CD8-positive, alpha-beta T cell (primary cell): ENCODE measurements at regions of chr6 and their contacts with region 1.

Region 1: GRCh38 chr6:158559895-158560835 is at the start of gene TMEM181:
- DNase-seq: peak; percentile 72 to 95 (median 87)
- ATAC-seq: peak; percentile 89
- H3K4me3 ChIP-seq: peak within 1 kb of the TSS; percentile 61
- H3K4me3 Mint-ChIP-seq: peak within 1 kb of the TSS; percentile 92
- H3K27ac ChIP-seq: peak within 1 kb of the TSS; percentile 74 to 87
- H3K27ac Mint-ChIP-seq: peak within 1 kb of the TSS; percentile 90
- H3K4me1 ChIP-seq: peaks cover 31% of the 10 kb centered on the region
- H3K4me1 Mint-ChIP-seq: peaks cover 45% of the 10 kb centered on the region
- H3K27me3 ChIP-seq: no peaks in the 10 kb centered on the region
- H3K27me3 Mint-ChIP-seq: no peaks in the 10 kb centered on the region
- CTCF ChIP-seq: no peak
- total RNA-seq, gene TMEM181: 9.3 to 10.3 TPM

Region 2: GRCh38 chr6:158168040-158168289 is 392.2 kb before region 1 on chr6 and contains the start of gene SERAC1:
- CTCF ChIA-PET with region 1: no interaction called
- POLR2A ChIA-PET with region 1: no interaction called
- intact Hi-C with region 1: loop called (anchors 1 to 5 kb)
- DNase-seq: no peak
- ATAC-seq: no peak
- H3K4me3 ChIP-seq: peak within 1 kb of the TSS; percentile 68 to 98
- H3K4me3 Mint-ChIP-seq: peak within 1 kb of the TSS; percentile 95
- H3K27ac ChIP-seq: peak within 1 kb of the TSS; percentile 90 to 98
- H3K27ac Mint-ChIP-seq: peak within 1 kb of the TSS; percentile 99
- H3K4me1 ChIP-seq: peaks cover 7% of the 10 kb centered on the region
- H3K4me1 Mint-ChIP-seq: peaks cover 35% of the 10 kb centered on the region
- H3K27me3 ChIP-seq: no peaks in the 10 kb centered on the region
- H3K27me3 Mint-ChIP-seq: no peaks in the 10 kb centered on the region
- CTCF ChIP-seq: no peak
- total RNA-seq, gene SERAC1: 1.1 to 2.4 TPM

Region 3: DNA sequence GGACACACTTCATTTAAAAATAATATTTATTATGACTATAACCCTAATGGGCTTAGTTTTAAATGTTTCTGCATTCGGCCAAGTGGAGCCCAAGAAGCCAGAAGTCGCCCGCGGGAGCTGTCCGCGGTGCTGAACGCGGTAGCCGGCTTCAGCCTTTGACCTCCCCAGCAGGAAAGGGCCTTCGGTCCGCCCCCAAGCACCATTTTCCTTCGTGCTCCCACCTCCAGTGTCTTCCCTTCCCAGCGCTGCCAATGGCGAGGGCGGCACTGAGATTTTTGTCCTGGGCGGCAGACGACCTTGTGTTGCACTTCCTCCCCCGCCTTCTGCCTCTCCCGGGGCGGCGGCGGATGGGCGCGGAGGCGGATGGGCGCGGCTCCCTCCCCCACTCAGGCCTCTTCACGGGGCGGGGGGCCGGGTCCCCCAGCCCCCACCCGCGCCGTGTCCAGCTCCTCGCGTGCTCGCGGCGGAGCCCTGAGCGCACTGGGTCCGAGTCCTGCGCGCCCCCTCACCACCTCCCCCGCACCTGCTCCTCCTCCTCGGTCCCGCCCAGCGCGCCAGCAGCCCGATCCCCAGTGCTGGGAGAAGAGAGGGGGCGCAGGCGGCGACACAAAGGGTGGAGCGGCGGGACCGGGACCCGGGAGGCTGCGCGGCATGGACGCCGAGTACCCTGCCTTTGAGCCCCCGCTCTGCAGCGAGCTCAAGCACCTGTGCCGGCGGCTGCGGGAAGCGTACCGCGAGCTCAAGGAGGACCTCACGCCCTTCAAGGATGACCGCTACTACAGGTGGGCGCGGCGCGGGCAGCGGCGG is 23.9 kb before region 1 on chr6:
- CTCF ChIA-PET with region 1: no interaction called
- POLR2A ChIA-PET with region 1: no interaction called
- intact Hi-C with region 1: loop called in 1 of 2 experiments (anchors 1 kb)
- DNase-seq: peak; percentile 44 to 81 (median 70)
- ATAC-seq: peak; percentile 78
- H3K4me3 ChIP-seq: peak overlapping the region; percentile 35 to 48
- H3K4me3 Mint-ChIP-seq: peak overlapping the region; percentile 74
- H3K27ac ChIP-seq: no peak overlapping the region
- H3K27ac Mint-ChIP-seq: no peak overlapping the region
- H3K4me1 ChIP-seq: no peaks in the 10 kb centered on the region
- H3K4me1 Mint-ChIP-seq: peaks cover 3% of the 10 kb centered on the region
- H3K27me3 ChIP-seq: peaks cover 0 to 27% of the 10 kb centered on the region in 2 experiments
- H3K27me3 Mint-ChIP-seq: peaks cover 58% of the 10 kb centered on the region
- CTCF ChIP-seq: no peak

Region 4: GRCh38 chr6:158649289-158650143 is 89.4 kb after region 1 on chr6 and contains the start of gene SYTL3:
- CTCF ChIA-PET with region 1: no interaction called
- POLR2A ChIA-PET with region 1: interaction called, 3 read pairs
- intact Hi-C with region 1: loop called in 1 of 2 experiments (anchors 5 kb)
- DNase-seq: peak; percentile 50 to 97 (median 76)
- ATAC-seq: peak; percentile 61
- H3K4me3 ChIP-seq: peak within 1 kb of the TSS in 1 of 2 experiments; percentile 43
- H3K4me3 Mint-ChIP-seq: peak within 1 kb of the TSS; percentile 77
- H3K27ac ChIP-seq: peak within 1 kb of the TSS; percentile 53 to 76
- H3K27ac Mint-ChIP-seq: peak within 1 kb of the TSS; percentile 85
- H3K4me1 ChIP-seq: peaks cover 51% of the 10 kb centered on the region
- H3K4me1 Mint-ChIP-seq: peaks cover 64% of the 10 kb centered on the region
- H3K27me3 ChIP-seq: no peaks in the 10 kb centered on the region
- H3K27me3 Mint-ChIP-seq: no peaks in the 10 kb centered on the region
- CTCF ChIP-seq: no peak
- total RNA-seq, gene SYTL3: 38.2 to 44.6 TPM